ENCODE measurements at regions of chrX and their contacts with region 1.

Region 1: DNA sequence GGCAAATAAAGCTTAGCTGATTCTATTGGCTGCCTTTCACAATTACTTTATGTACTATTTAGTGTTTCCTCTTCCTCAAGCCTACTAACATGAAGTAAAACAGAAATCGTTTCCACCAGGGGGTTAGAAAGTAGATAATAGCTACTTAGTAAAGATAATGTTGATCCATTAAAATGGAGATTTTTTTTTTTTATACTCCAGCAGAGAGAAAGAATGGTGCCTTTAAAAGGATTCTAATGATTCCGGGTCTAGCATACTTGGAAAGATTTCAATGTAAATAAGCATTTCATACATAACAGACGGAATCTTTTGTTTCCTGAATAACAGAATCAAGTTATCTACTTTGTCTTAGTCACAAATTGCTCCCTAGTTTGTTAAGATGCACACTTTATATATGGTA is 37.1 kb downstream of the GK start:
- DNase-seq: no peak
- ATAC-seq: no peak
- H3K4me3 ChIP-seq: no peak overlapping the region
- H3K27ac ChIP-seq: no peak overlapping the region
- H3K4me1 ChIP-seq: no peaks in the 10 kb centered on the region
- H3K27me3 ChIP-seq: peaks cover 0 to 3% (median 0%) of the 10 kb centered on the region in 9 donors
- CTCF ChIP-seq: no peak
- POLR2A ChIP-seq: no peak

Region 2: GRCh38 chrX:30635630-30636029 is 54.7 kb before region 1 on chrX:
- intact Hi-C with region 1: loop called in 1 of 10 experiments (anchors 10 kb)
- DNase-seq: no peak
- ATAC-seq: no peak
- H3K4me3 ChIP-seq: no peak overlapping the region
- H3K27ac ChIP-seq: no peak overlapping the region
- H3K4me1 ChIP-seq: peaks cover 0 to 9% (median 0%) of the 10 kb centered on the region in 12 donors
- H3K27me3 ChIP-seq: no peaks in the 10 kb centered on the region
- CTCF ChIP-seq: peak in 9 of 12 donors; percentile 8 to 42 (median 28)
- POLR2A ChIP-seq: no peak

Region 3: DNA sequence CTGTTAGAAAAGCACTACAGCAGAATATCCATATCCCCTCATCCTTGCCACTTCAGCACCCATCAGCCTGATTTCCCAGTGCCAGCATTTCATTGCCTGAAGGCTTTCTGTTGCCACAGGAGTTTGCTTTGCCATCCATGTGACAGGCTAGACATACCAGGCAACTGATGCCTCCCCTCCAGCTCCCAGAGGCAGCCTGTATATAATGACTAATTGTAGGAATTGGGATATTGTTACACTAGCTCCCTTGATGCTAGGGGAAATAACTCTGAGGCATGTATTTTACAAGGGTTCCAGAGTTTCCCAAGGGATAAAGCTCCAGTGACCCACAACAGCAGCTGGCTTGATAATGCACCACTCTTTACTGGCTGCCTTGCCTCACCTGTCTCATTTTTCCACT is 989.5 kb after region 1 on chrX:
- intact Hi-C with region 1: no loop called
- DNase-seq: no peak
- ATAC-seq: no peak
- H3K4me3 ChIP-seq: no peak overlapping the region
- H3K27ac ChIP-seq: no peak overlapping the region
- H3K4me1 ChIP-seq: no peaks in the 10 kb centered on the region
- H3K27me3 ChIP-seq: no peaks in the 10 kb centered on the region
- CTCF ChIP-seq: no peak
- POLR2A ChIP-seq: no peak